OCI-LY7 (cell line): ENCODE measurements at regions of chr9 and their contacts with region 1.

Region 1: DNA sequence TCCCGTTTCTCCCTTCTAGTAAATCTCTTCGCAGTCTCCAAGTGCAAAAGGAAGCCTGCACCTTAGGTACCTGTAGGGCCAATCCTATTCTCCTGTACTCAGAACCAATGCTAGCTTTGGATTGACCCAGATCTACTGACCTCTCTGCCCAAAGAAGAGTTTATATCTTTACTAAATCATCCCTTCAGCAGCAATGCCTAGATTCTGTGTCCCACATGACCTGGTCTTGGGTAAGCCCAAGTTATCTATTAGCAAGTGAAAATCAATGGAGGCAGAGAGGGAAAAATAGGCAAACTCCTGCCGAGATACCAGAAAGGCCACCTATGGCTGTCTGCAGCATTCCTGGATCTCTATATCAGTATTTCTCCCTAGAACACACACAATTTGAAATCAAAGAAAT is 60.0 kb downstream of the SUSD1 start:
- DNase-seq: no peak
- H3K4me3 ChIP-seq: no peak overlapping the region
- H3K27ac ChIP-seq: no peak overlapping the region
- H3K4me1 ChIP-seq: no peaks in the 10 kb centered on the region
- CTCF ChIP-seq: no peak

Region 2: DNA sequence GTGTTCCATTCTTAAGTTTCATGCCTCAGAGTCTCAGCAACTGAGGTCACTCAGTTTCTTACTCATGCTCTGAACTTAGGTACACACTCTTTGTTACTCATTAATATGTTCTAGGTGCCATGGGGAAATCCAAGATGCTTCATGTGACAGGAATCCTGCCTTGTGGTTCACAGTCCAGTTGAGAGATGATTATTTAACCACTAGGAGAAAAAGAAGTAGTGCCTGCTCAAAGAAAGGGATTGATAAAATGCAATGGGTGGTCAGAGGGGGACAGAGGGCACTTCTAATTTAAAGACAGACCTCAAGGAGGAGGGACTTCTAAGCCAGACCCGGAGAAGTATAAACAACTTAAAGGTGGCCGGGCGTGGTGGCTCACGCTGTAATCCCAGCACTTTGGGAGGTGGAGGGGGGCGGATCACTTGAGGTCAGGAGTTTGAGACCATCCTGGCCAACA is 149.5 kb before region 1 on chr9:
- CTCF ChIA-PET with region 1: no interaction called
- POLR2A ChIA-PET with region 1: no interaction called
- intact Hi-C with region 1: no loop called
- DNase-seq: no peak
- H3K4me3 ChIP-seq: no peak overlapping the region
- H3K27ac ChIP-seq: no peak overlapping the region
- H3K4me1 ChIP-seq: no peaks in the 10 kb centered on the region
- CTCF ChIP-seq: no peak

Region 3: DNA sequence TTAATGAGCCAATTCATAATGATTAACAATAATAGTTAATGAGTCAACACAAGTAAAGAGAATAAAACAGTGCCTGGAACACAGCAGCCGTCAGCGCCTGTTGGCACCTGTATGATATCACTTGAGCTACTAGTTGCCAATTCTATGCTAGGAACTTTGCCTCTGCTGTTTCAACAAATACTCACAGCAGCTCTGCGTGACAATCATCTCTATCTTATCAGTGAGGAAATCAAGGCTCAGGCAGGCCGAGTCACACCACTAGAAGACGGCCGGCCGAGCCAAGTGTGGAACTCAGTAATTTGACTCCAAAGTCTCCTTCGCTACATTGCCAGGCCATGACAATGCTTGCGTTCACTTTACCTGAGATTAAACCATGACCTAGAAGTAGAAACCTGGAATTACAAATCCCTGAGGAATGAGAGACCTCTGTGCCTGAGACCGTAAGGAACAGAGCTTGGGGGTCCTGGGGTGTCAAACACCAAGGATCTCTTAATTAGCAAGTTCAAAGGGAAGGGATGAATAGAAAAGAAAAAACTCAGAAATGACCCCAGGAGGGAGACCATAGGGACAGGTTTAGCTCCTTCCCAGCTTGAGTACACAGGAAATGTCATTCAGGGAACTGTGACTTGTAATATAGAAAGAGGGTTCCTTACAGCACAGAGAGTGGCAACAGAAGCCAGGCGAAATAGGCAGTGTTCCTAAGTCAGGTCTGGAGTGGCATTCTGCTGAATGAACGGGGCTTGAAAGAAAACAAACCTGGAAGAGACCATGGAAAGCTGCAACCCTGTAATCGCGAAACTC is 49.1 kb before region 1 on chr9:
- CTCF ChIA-PET with region 1: no interaction called
- POLR2A ChIA-PET with region 1: interaction called, 12 read pairs
- intact Hi-C with region 1: no loop called
- DNase-seq: no peak
- H3K4me3 ChIP-seq: no peak overlapping the region
- H3K27ac ChIP-seq: no peak overlapping the region
- H3K4me1 ChIP-seq: no peaks in the 10 kb centered on the region
- CTCF ChIP-seq: no peak

Region 4: DNA sequence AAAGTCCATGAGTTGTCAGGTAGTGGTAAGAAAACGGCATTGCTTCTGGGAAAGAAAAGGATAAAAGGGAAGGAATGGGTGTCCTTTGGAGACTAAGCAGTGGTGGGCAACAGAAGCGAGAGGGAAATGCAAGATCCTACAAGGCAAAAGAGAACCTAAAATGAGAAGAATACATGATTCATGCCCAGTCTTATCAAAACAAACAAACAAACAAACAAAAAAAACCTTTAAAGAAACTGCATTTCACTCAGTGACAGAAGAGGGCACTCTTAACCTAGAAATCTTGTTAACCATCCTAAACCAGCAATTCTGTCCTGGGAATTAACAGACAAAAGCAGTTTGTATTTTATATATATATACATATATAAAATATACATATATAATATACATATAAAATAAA is 28.5 kb before region 1 on chr9:
- CTCF ChIA-PET with region 1: no interaction called
- POLR2A ChIA-PET with region 1: no interaction called
- intact Hi-C with region 1: no loop called
- DNase-seq: peak; percentile 12
- H3K4me3 ChIP-seq: no peak overlapping the region
- H3K27ac ChIP-seq: no peak overlapping the region
- H3K4me1 ChIP-seq: no peaks in the 10 kb centered on the region
- CTCF ChIP-seq: peak; percentile 77